ENCODE measurements at regions of chr10 and their contacts with region 1.

Region 1: GRCh38 chr10:13074561-13075451 is 25.2 kb upstream of the OPTN start:
- DNase-seq: peak; percentile 80
- H3K4me3 Mint-ChIP-seq: no peak overlapping the region
- H3K27ac Mint-ChIP-seq: no peak overlapping the region
- H3K4me1 Mint-ChIP-seq: peaks cover 3% of the 10 kb centered on the region
- H3K27me3 Mint-ChIP-seq: peaks cover 17% of the 10 kb centered on the region

Region 2: DNA sequence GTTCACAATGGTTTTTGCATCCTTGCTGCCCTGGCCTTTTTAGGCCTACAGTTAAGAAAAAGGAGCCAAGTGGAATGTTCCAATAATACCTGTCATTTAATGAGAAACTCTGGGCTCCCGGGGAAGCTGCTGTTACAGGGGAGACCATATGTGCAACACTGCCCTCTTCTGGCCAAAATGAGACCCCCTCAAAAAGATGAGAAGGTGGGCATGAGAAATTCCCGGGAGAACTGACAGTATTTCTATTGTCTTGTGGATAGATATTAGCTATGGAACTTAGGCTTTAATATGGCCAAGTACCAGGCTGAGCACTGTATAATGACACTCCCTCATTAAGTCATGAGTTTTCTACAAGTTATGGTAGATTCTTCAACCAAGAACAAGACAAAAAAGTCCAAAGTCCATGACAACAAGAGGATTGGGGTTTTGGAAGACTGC is 172.7 kb before region 1 on chr10:
- CTCF ChIA-PET with region 1: interaction called, 7 read pairs
- POLR2A ChIA-PET with region 1: no interaction called
- intact Hi-C with region 1: loop called (anchors 5 kb)
- DNase-seq: peak; percentile 57
- H3K4me3 Mint-ChIP-seq: no peak overlapping the region
- H3K27ac Mint-ChIP-seq: no peak overlapping the region
- H3K4me1 Mint-ChIP-seq: no peaks in the 10 kb centered on the region
- H3K27me3 Mint-ChIP-seq: peaks cover 16% of the 10 kb centered on the region

Region 3: GRCh38 chr10:13062803-13063202 is 12.0 kb before region 1 on chr10:
- CTCF ChIA-PET with region 1: interaction called, 11 read pairs
- POLR2A ChIA-PET with region 1: no interaction called
- intact Hi-C with region 1: no loop called
- DNase-seq: peak; percentile 26
- H3K4me3 Mint-ChIP-seq: no peak overlapping the region
- H3K27ac Mint-ChIP-seq: no peak overlapping the region
- H3K4me1 Mint-ChIP-seq: no peaks in the 10 kb centered on the region
- H3K27me3 Mint-ChIP-seq: peaks cover 17% of the 10 kb centered on the region

Region 4: GRCh38 chr10:13327534-13327933 is 252.7 kb after region 1 on chr10:
- CTCF ChIA-PET with region 1: no interaction called
- POLR2A ChIA-PET with region 1: no interaction called
- intact Hi-C with region 1: no loop called
- DNase-seq: no peak
- H3K4me3 Mint-ChIP-seq: no peak overlapping the region
- H3K27ac Mint-ChIP-seq: peak overlapping the region; percentile 19
- H3K4me1 Mint-ChIP-seq: no peaks in the 10 kb centered on the region
- H3K27me3 Mint-ChIP-seq: no peaks in the 10 kb centered on the region

Measured in activated CD4-positive, alpha-beta memory T cell treated with anti-CD3 and anti-CD28 coated beads for 36 hours (primary cell).